Prostate gland (tissue), 2 donors: ENCODE measurements at regions of chr13 and their contacts with region 1.

Region 1: GRCh38 chr13:113208424-113209335 is at the start of gene PCID2:
- DNase-seq: peak; percentile 85
- H3K4me3 ChIP-seq: peak within 1 kb of the TSS; percentile 94 to 96
- H3K27ac ChIP-seq: peak within 1 kb of the TSS; percentile 99
- H3K4me1 ChIP-seq: peaks cover 11% of the 10 kb centered on the region
- H3K27me3 ChIP-seq: no peaks in the 10 kb centered on the region
- CTCF ChIP-seq: peak in 2 of 4 experiments; percentile 17 to 25
- POLR2A ChIP-seq: peak; percentile 76
- total RNA-seq, gene PCID2: 47.7 to 48.6 TPM

Region 2: GRCh38 chr13:112942689-112943308 is 265.9 kb before region 1 on chr13:
- intact Hi-C with region 1: loop called (anchors 10 kb)
- DNase-seq: peak; percentile 97
- H3K4me3 ChIP-seq: peak overlapping the region; percentile 35 to 54
- H3K27ac ChIP-seq: peak overlapping the region; percentile 82
- H3K4me1 ChIP-seq: no peaks in the 10 kb centered on the region
- H3K27me3 ChIP-seq: no peaks in the 10 kb centered on the region
- CTCF ChIP-seq: peak; percentile 95 to 99 (median 96)
- POLR2A ChIP-seq: no peak

Region 3: GRCh38 chr13:113153810-113154748 is 54.6 kb before region 1 on chr13:
- intact Hi-C with region 1: loop called (anchors 5 kb)
- DNase-seq: peak; percentile 76
- H3K4me3 ChIP-seq: peak overlapping the region; percentile 24 to 25
- H3K27ac ChIP-seq: peak overlapping the region; percentile 75 to 76
- H3K4me1 ChIP-seq: no peaks in the 10 kb centered on the region
- H3K27me3 ChIP-seq: no peaks in the 10 kb centered on the region
- CTCF ChIP-seq: no peak
- POLR2A ChIP-seq: peak; percentile 62

Region 4: GRCh38 chr13:113296842-113297369 is 88.2 kb after region 1 on chr13 and contains the start of gene LAMP1:
- intact Hi-C with region 1: loop called (anchors 5 kb)
- DNase-seq: peak; percentile 94
- H3K4me3 ChIP-seq: peak within 1 kb of the TSS; percentile 90
- H3K27ac ChIP-seq: peak within 1 kb of the TSS; percentile 83 to 86
- H3K4me1 ChIP-seq: no peaks in the 10 kb centered on the region
- H3K27me3 ChIP-seq: no peaks in the 10 kb centered on the region
- CTCF ChIP-seq: peak in 2 of 4 experiments; percentile 24 to 33
- POLR2A ChIP-seq: peak; percentile 56
- total RNA-seq, gene LAMP1: 214 to 246 TPM